ENCODE measurements at regions of chr1 and their contacts with region 1.

Region 1: GRCh38 chr1:30779294-30780071 is 21.9 kb upstream of the LAPTM5 start:
- DNase-seq: peak; percentile 66 to 95 (median 86)
- ATAC-seq: peak; percentile 75 to 92 (median 80)
- H3K4me3 ChIP-seq: no peak overlapping the region
- H3K4me3 Mint-ChIP-seq: peak overlapping the region in 1 of 3 donors; percentile 17
- H3K27ac ChIP-seq: no peak overlapping the region
- H3K27ac Mint-ChIP-seq: peak overlapping the region in 1 of 2 donors; percentile 58
- H3K4me1 ChIP-seq: peaks cover 4 to 19% of the 10 kb centered on the region in 2 experiments
- H3K4me1 Mint-ChIP-seq: peaks cover 13 to 21% (median 21%) of the 10 kb centered on the region in 3 donors
- H3K27me3 ChIP-seq: peaks cover 0 to 17% of the 10 kb centered on the region in 2 experiments
- H3K27me3 Mint-ChIP-seq: peaks cover 0 to 1% of the 10 kb centered on the region in 2 donors

Region 2: GRCh38 chr1:30492451-30492850 is 287.0 kb before region 1 on chr1:
- CTCF ChIA-PET with region 1: no interaction called
- POLR2A ChIA-PET with region 1: no interaction called
- DNase-seq: no peak
- ATAC-seq: no peak
- H3K4me3 ChIP-seq: no peak overlapping the region
- H3K4me3 Mint-ChIP-seq: no peak overlapping the region
- H3K27ac ChIP-seq: no peak overlapping the region
- H3K27ac Mint-ChIP-seq: no peak overlapping the region
- H3K4me1 ChIP-seq: no peaks in the 10 kb centered on the region
- H3K4me1 Mint-ChIP-seq: no peaks in the 10 kb centered on the region
- H3K27me3 ChIP-seq: peaks cover 0 to 16% of the 10 kb centered on the region in 2 experiments
- H3K27me3 Mint-ChIP-seq: peaks cover 3 to 7% of the 10 kb centered on the region in 2 donors

Region 3: DNA sequence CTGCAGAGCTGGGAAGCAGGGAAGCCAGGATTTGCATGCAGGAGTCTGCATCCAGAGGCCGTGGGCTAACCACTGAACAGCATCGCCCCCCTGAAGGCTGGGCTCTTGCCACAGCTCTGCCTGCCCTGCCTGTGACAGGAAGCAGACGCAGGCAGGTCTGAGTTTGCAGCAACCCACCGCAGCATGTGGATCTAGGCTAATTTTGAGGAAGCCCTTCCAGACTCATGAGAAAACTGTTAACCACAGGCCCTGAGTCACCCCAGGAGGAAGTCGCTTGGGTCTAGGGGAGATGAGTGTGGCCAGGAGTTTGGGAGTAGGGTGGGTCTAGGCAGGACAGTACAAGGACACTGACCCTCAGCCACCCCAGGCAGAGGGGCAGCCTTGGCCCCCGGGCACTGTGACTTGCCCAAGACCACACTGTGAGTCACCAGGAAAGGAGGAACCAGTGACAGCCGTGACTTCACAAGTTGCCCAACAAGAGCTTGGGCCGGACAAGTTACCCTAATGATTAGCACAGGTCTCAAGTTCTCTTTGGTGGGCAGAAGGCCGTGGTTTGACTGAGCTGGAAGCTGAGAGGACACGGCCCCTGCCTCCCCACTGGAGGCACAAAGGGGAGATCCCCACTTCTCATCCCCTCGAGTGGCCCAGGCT is 22.8 kb before region 1 on chr1:
- CTCF ChIA-PET with region 1: interaction called, 4 to 25 read pairs
- POLR2A ChIA-PET with region 1: no interaction called
- DNase-seq: peak; percentile 43 to 83 (median 70)
- ATAC-seq: peak; percentile 65 to 71 (median 68)
- H3K4me3 ChIP-seq: peak overlapping the region; percentile 72 to 94
- H3K4me3 Mint-ChIP-seq: peak overlapping the region; percentile 98 to 100 (median 99)
- H3K27ac ChIP-seq: peak overlapping the region; percentile 79
- H3K27ac Mint-ChIP-seq: peak overlapping the region; percentile 96 to 98
- H3K4me1 ChIP-seq: peaks cover 65 to 86% of the 10 kb centered on the region in 2 experiments
- H3K4me1 Mint-ChIP-seq: peaks cover 77 to 94% (median 87%) of the 10 kb centered on the region in 3 donors
- H3K27me3 ChIP-seq: no peaks in the 10 kb centered on the region
- H3K27me3 Mint-ChIP-seq: no peaks in the 10 kb centered on the region

Region 4: GRCh38 chr1:30768830-30769718 is 10.4 kb before region 1 on chr1:
- CTCF ChIA-PET with region 1: no interaction called
- POLR2A ChIA-PET with region 1: no interaction called
- DNase-seq: no peak
- ATAC-seq: peak in 1 of 4 experiments; percentile 14
- H3K4me3 ChIP-seq: no peak overlapping the region
- H3K4me3 Mint-ChIP-seq: no peak overlapping the region
- H3K27ac ChIP-seq: no peak overlapping the region
- H3K27ac Mint-ChIP-seq: peak overlapping the region in 1 of 2 donors; percentile 57
- H3K4me1 ChIP-seq: peaks cover 17 to 18% of the 10 kb centered on the region in 2 experiments
- H3K4me1 Mint-ChIP-seq: peaks cover 18 to 23% (median 20%) of the 10 kb centered on the region in 3 donors
- H3K27me3 ChIP-seq: peaks cover 0 to 6% of the 10 kb centered on the region in 2 experiments
- H3K27me3 Mint-ChIP-seq: no peaks in the 10 kb centered on the region

Region 5: DNA sequence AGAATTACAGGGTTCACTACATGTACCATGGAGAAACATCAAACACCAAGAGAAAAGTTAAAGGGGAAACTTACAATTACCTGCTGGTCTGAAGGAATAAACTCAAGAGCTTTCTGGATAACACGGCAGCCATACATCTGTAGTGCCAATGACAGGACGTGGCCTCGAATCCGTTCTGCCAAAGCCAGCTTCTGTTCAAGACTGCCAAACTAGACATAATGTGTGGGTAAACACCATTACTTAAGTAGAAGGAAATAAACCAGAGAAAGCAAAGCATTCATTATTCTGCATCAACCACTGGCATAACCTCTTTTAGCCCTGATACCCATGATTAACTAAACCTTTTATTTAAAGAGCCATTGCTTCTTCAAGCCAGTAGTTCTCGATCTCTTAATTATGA is 170.6 kb after region 1 on chr1:
- CTCF ChIA-PET with region 1: no interaction called
- POLR2A ChIA-PET with region 1: no interaction called
- DNase-seq: no peak
- ATAC-seq: no peak
- H3K4me3 ChIP-seq: no peak overlapping the region
- H3K4me3 Mint-ChIP-seq: no peak overlapping the region
- H3K27ac ChIP-seq: no peak overlapping the region
- H3K27ac Mint-ChIP-seq: no peak overlapping the region
- H3K4me1 ChIP-seq: no peaks in the 10 kb centered on the region
- H3K4me1 Mint-ChIP-seq: peaks cover 21 to 28% (median 26%) of the 10 kb centered on the region in 3 donors
- H3K27me3 ChIP-seq: no peaks in the 10 kb centered on the region
- H3K27me3 Mint-ChIP-seq: no peaks in the 10 kb centered on the region